Tibial artery (tissue), 4 donors: ENCODE measurements at regions of chr14 and their contacts with region 1.

Region 1: GRCh38 chr14:69354383-69355153 is 43.5 kb downstream of the ERH start:
- DNase-seq: no peak
- H3K4me3 ChIP-seq: no peak overlapping the region
- H3K27ac ChIP-seq: peak overlapping the region; percentile 58 to 81
- H3K4me1 ChIP-seq: peaks cover 0 to 36% (median 20%) of the 10 kb centered on the region in 4 donors
- H3K27me3 ChIP-seq: no peaks in the 10 kb centered on the region
- CTCF ChIP-seq: no peak

Region 2: GRCh38 chr14:69260861-69261564 is 93.6 kb before region 1 on chr14:
- intact Hi-C with region 1: loop called (anchors 5 kb)
- DNase-seq: peak in 1 of 2 donors; percentile 72
- H3K4me3 ChIP-seq: peak overlapping the region; percentile 59 to 67
- H3K27ac ChIP-seq: peak overlapping the region; percentile 53 to 79
- H3K4me1 ChIP-seq: peaks cover 0 to 52% (median 40%) of the 10 kb centered on the region in 4 donors
- H3K27me3 ChIP-seq: no peaks in the 10 kb centered on the region
- CTCF ChIP-seq: peak; percentile 57 to 77